WTC11 (cell line): ENCODE measurements at regions of chr19 and their contacts with region 1.

Region 1: DNA sequence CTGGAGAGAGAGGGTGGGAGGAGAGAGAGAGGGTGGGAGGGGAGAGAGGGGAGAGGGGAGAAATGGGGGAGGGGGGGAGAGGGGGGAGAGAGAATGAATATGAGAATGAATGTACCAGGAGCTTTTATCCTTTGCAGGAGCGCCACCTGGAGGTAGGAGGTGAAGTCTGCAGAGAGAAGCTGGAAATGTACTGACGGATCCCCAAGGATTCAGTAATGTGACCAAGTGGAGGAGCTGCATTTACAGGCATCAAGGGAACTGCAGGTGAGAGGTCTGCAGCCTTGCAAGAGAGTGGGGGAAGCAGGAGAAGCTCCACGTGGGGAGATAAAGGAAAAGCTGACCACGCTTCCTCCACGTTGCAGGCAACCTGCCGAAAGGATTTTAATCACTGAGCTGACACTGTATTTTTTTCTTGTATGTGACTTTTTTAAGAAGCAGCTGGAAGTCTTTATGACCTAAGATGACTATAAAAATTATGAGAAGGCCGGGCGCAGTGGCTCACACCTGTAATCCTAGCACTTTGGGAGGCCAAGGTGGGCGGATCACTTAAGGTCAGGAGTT is 33.7 kb downstream of the VSTM1 start:
- DNase-seq: peak; percentile 86
- ATAC-seq: peak; percentile 90
- H3K4me3 Mint-ChIP-seq: no peak overlapping the region
- H3K27ac Mint-ChIP-seq: peak overlapping the region; percentile 75
- H3K4me1 Mint-ChIP-seq: peaks cover 36% of the 10 kb centered on the region
- H3K27me3 Mint-ChIP-seq: no peaks in the 10 kb centered on the region
- CTCF ChIP-seq: peak; percentile 79

Region 2: DNA sequence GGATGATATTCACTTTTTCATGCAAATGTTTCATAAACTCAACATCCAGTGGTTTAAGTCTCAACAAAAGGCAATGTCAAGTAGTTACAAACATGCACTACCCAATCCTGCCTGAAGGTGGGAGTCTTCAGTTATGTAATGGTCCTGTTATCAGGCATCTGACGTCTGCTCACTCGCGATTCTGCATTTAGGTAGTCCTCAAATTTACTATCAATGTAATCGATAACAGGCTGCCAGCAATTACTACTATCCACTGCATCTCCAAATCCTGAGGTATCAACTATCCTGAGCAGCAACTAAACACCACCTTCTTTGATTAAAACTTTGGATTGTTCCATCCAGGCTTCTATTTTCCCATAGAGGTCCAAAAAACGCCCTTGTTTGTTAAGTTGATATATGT is 257.1 kb before region 1 on chr19:
- CTCF ChIA-PET with region 1: interaction called, 11 read pairs
- POLR2A ChIA-PET with region 1: no interaction called
- DNase-seq: peak; percentile 78
- ATAC-seq: peak; percentile 69
- H3K4me3 Mint-ChIP-seq: peak overlapping the region; percentile 32
- H3K27ac Mint-ChIP-seq: peak overlapping the region; percentile 95
- H3K4me1 Mint-ChIP-seq: peaks cover 54% of the 10 kb centered on the region
- H3K27me3 Mint-ChIP-seq: no peaks in the 10 kb centered on the region
- CTCF ChIP-seq: peak; percentile 62

Region 3: GRCh38 chr19:53879140-53880081 is 150.6 kb before region 1 on chr19:
- CTCF ChIA-PET with region 1: interaction called, 15 read pairs
- POLR2A ChIA-PET with region 1: no interaction called
- DNase-seq: peak; percentile 100
- ATAC-seq: peak; percentile 84
- H3K4me3 Mint-ChIP-seq: no peak overlapping the region
- H3K27ac Mint-ChIP-seq: peak overlapping the region; percentile 81
- H3K4me1 Mint-ChIP-seq: peaks cover 27% of the 10 kb centered on the region
- H3K27me3 Mint-ChIP-seq: peaks cover 11% of the 10 kb centered on the region
- CTCF ChIP-seq: no peak

Region 4: GRCh38 chr19:53912653-53913052 is 117.4 kb before region 1 on chr19:
- CTCF ChIA-PET with region 1: interaction called, 35 read pairs
- POLR2A ChIA-PET with region 1: no interaction called
- DNase-seq: peak; percentile 88
- ATAC-seq: peak; percentile 49
- H3K4me3 Mint-ChIP-seq: no peak overlapping the region
- H3K27ac Mint-ChIP-seq: no peak overlapping the region; the same call in 1 of the 2 replicates
- H3K4me1 Mint-ChIP-seq: peaks cover 17% of the 10 kb centered on the region
- H3K27me3 Mint-ChIP-seq: peaks cover 34% of the 10 kb centered on the region
- CTCF ChIP-seq: peak; percentile 92

Region 5: DNA sequence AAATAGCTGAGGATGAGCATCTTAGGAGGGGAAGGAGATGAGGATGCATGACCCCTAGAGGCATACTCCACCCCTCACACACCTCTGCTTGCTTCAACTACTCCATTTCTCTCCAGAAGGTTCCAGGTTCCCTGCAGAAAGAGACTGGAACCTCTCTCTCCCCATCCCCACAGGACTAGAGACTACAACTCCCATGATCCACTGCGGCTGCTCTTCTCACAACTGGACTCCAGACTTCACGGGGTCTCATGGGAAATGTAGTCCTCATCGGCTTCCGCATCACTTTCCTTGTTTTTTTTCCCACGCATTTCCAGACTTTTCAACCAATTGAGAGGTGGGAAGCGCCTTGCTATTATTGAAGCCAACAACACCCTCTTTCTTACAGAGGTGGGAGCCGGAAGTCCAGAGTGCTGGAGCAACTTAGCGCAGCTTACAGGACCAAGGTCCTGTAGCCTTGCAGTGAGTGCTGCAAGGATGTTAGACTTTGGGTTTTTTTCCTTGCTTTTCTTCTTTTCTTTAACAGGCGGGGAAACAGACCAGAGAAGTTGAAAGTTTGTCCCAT is 52.5 kb before region 1 on chr19:
- CTCF ChIA-PET with region 1: interaction called, 48 read pairs
- POLR2A ChIA-PET with region 1: interaction called, 9 read pairs
- DNase-seq: peak; percentile 82
- ATAC-seq: 0 out of 2 replicates have a peak, but pooled peaks have one; percentile 1
- H3K4me3 Mint-ChIP-seq: peak overlapping the region; percentile 93
- H3K27ac Mint-ChIP-seq: peak overlapping the region; percentile 94
- H3K4me1 Mint-ChIP-seq: peaks cover 15% of the 10 kb centered on the region
- H3K27me3 Mint-ChIP-seq: peaks cover 4% of the 10 kb centered on the region; the same call in 1 of the 2 replicates
- CTCF ChIP-seq: no peak

Region 6: DNA sequence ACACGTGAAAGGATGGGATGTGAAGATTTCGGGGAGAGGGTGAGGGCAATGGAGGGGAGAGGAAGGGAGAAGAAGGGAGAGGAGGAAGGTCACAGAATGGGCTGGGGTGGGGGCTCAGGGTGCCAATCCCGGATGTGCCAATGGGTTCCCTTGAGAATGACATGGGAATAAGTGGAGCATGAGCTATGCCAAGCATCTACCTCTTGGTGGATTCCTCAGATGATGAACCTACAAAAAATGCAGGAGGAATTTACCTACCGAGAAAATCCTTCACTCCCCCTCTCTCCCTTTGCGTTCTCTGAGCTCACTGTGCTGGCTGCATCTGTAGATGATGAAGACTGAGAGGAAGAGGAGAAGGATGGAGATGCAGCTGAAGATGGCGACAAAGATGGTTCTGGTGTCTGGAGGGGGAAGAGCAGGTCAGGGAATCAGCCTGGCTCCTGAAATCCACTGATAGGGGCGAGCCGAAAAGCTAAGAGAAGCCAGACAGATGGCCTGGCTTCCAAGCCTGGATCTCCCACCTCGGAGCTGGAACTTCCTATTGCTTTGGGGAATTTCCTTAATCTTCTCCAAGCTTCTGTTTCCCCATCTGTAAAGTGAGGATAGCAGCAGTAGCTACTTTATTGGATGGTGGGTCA is 12.1 kb after region 1 on chr19:
- CTCF ChIA-PET with region 1: interaction called, 21 read pairs
- POLR2A ChIA-PET with region 1: interaction called, 4 read pairs
- DNase-seq: no peak
- ATAC-seq: no peak
- H3K4me3 Mint-ChIP-seq: no peak overlapping the region
- H3K27ac Mint-ChIP-seq: 0 out of 2 replicates have a peak overlapping the region, but pooled peaks have one; percentile 28
- H3K4me1 Mint-ChIP-seq: peaks cover 28% of the 10 kb centered on the region
- H3K27me3 Mint-ChIP-seq: peaks cover 21% of the 10 kb centered on the region
- CTCF ChIP-seq: no peak

Region 7: DNA sequence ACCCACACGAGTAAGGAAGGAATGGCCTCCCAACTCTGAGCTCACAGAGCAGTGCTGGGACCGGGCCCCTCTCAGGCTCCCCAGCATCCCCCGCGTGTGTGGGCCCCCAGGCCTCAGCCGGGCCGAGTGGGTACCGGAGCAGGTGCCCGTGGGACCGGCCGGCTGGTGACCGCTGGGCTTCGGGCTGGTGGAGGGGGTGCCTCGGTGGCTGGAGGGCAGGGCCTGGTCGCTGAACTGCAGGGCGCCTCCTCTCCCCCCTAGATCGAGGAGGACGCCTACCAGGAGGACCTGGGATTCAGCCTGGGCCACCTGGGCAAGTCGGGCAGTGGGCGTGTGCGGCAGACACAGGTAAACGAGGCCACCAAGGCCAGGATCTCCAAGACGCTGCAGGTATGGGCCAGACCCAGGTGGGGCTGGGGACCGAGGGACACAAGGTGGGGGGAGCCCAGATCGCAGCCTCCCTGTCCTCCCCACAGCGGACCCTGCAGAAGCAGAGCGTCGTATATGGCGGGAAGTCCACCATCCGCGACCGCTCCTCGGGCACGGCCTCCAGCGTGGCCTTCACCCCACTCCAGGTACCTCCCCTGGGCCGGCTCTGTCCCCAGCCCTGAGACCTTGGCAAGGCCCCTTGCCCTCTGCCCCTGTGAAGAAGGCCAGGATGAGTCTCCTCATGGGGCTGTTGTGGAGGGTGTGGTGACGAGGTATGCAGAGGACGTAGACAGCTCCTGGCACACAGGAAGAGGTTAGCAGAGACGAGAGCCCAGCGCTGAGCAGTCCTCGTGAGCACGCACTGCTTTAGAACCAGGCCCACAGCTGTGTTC is 99.0 kb after region 1 on chr19:
- CTCF ChIA-PET with region 1: no interaction called
- POLR2A ChIA-PET with region 1: no interaction called
- DNase-seq: no peak
- ATAC-seq: no peak
- H3K4me3 Mint-ChIP-seq: no peak overlapping the region
- H3K27ac Mint-ChIP-seq: no peak overlapping the region
- H3K4me1 Mint-ChIP-seq: no peaks in the 10 kb centered on the region
- H3K27me3 Mint-ChIP-seq: no peaks in the 10 kb centered on the region
- CTCF ChIP-seq: no peak

Region 8: DNA sequence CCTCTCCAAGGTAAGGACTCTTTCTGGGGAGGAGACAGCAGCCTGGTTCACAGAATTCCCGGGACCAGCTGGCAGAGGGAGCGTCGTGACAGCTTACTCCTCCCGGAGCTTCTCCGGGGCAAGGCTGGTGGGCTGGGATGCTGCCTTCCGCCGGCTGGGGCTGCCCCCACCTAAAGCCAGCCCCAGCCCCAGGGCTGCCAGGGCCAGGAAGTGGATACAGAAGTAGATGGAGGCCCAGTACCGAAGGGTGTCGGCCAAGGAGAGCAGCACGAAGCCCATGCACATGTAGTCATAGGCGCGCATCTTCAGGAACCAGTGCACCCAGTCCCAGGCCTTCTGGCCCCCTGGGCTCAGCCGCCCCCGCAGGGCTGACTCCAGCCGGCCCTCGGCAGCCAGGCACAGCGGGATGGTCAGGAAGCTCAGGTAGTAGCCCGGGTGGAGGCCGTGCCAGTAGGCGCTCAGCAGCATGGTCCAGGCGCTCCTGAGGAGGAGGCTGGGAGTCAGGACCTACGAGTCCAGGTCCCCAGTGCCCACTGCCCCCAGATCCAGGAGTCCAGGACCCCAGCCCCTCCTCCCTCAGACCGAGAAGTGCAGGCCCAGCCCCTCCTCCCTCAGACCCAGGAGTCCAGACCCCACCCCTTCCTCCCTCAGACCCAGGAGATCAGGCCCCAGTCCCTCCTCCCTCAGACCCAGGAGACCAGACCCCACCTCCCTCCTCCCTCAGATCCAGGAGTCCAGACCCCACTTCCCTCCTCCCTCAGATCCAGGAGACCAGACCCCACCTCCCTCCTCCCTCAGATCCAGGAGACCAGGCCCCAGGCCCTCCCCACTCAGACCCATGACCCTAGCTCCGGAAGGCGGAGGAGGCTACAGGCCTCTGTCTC is 144.2 kb after region 1 on chr19:
- CTCF ChIA-PET with region 1: no interaction called
- POLR2A ChIA-PET with region 1: no interaction called
- DNase-seq: no peak
- ATAC-seq: no peak
- H3K4me3 Mint-ChIP-seq: no peak overlapping the region
- H3K27ac Mint-ChIP-seq: no peak overlapping the region
- H3K4me1 Mint-ChIP-seq: peaks cover 20% of the 10 kb centered on the region
- H3K27me3 Mint-ChIP-seq: no peaks in the 10 kb centered on the region
- CTCF ChIP-seq: no peak